ENCODE measurements at regions of chr20 and their contacts with region 1.

Region 1: GRCh38 chr20:4956200-4956810 is 45.0 kb downstream of the SLC23A2 start:
- DNase-seq: peak; percentile 77
- H3K4me3 ChIP-seq: no peak overlapping the region
- H3K27ac ChIP-seq: no peak overlapping the region
- H3K4me1 ChIP-seq: peaks cover 4% of the 10 kb centered on the region
- CTCF ChIP-seq: peak; percentile 99

Region 2: GRCh38 chr20:4613718-4614620 is 342.3 kb before region 1 on chr20:
- CTCF ChIA-PET with region 1: no interaction called
- POLR2A ChIA-PET with region 1: no interaction called
- intact Hi-C with region 1: loop called (anchors 5 kb)
- DNase-seq: peak; percentile 62
- H3K4me3 ChIP-seq: no peak overlapping the region
- H3K27ac ChIP-seq: no peak overlapping the region
- H3K4me1 ChIP-seq: peaks cover 10% of the 10 kb centered on the region
- CTCF ChIP-seq: peak; percentile 79

Region 3: GRCh38 chr20:4898282-4899244 is 57.7 kb before region 1 on chr20:
- CTCF ChIA-PET with region 1: no interaction called
- POLR2A ChIA-PET with region 1: no interaction called
- intact Hi-C with region 1: no loop called
- DNase-seq: no peak
- H3K4me3 ChIP-seq: no peak overlapping the region
- H3K27ac ChIP-seq: no peak overlapping the region
- H3K4me1 ChIP-seq: peaks cover 20% of the 10 kb centered on the region
- CTCF ChIP-seq: no peak

Region 4: GRCh38 chr20:4925842-4926530 is 30.3 kb before region 1 on chr20:
- CTCF ChIA-PET with region 1: no interaction called
- POLR2A ChIA-PET with region 1: no interaction called
- intact Hi-C with region 1: no loop called
- DNase-seq: no peak
- H3K4me3 ChIP-seq: no peak overlapping the region
- H3K27ac ChIP-seq: no peak overlapping the region
- H3K4me1 ChIP-seq: no peaks in the 10 kb centered on the region
- CTCF ChIP-seq: no peak